ENCODE measurements at regions of chr11 and their contacts with region 1.

Region 1: GRCh38 chr11:6531267-6531752 is 34.2 kb downstream of the DNHD1 start:
- DNase-seq: peak in 7 of 9 donors; percentile 7 to 51 (median 39)
- ATAC-seq: peak; percentile 83
- H3K4me3 ChIP-seq: no peak overlapping the region
- H3K4me3 Mint-ChIP-seq: no peak overlapping the region
- H3K27ac ChIP-seq: no peak overlapping the region
- H3K27ac Mint-ChIP-seq: no peak overlapping the region
- H3K4me1 ChIP-seq: peaks cover 4 to 5% of the 10 kb centered on the region in 2 donors
- H3K4me1 Mint-ChIP-seq: peaks cover 5 to 14% (median 11%) of the 10 kb centered on the region in 7 donors
- H3K27me3 ChIP-seq: no peaks in the 10 kb centered on the region
- H3K27me3 Mint-ChIP-seq: no peaks in the 10 kb centered on the region

Region 2: GRCh38 chr11:5899519-5899918 is 631.8 kb before region 1 on chr11:
- CTCF ChIA-PET with region 1: no interaction called
- POLR2A ChIA-PET with region 1: no interaction called
- intact Hi-C with region 1: no loop called
- DNase-seq: no peak
- ATAC-seq: no peak
- H3K4me3 ChIP-seq: no peak overlapping the region
- H3K4me3 Mint-ChIP-seq: no peak overlapping the region
- H3K27ac ChIP-seq: no peak overlapping the region
- H3K27ac Mint-ChIP-seq: no peak overlapping the region
- H3K4me1 ChIP-seq: no peaks in the 10 kb centered on the region
- H3K4me1 Mint-ChIP-seq: no peaks in the 10 kb centered on the region
- H3K27me3 ChIP-seq: no peaks in the 10 kb centered on the region
- H3K27me3 Mint-ChIP-seq: peaks cover 0 to 20% (median 2%) of the 10 kb centered on the region in 5 donors

Region 3: GRCh38 chr11:6603287-6604080 is 72.2 kb after region 1 on chr11 and contains the starts of genes ILK and RRP8:
- CTCF ChIA-PET with region 1: interaction called, 9 read pairs
- POLR2A ChIA-PET with region 1: interaction called, 3 read pairs
- intact Hi-C with region 1: loop called (anchors 1 kb)
- DNase-seq: peak; percentile 69 to 86 (median 78)
- ATAC-seq: peak; percentile 92
- H3K4me3 ChIP-seq: peak within 1 kb of the TSS; percentile 85
- H3K4me3 Mint-ChIP-seq: no peak within 1 kb of the TSS
- H3K27ac ChIP-seq: peak within 1 kb of the TSS; percentile 86
- H3K27ac Mint-ChIP-seq: no peak within 1 kb of the TSS
- H3K4me1 ChIP-seq: peaks cover 51% of the 10 kb centered on the region in 2 donors
- H3K4me1 Mint-ChIP-seq: peaks cover 9 to 33% (median 21%) of the 10 kb centered on the region in 7 donors
- H3K27me3 ChIP-seq: no peaks in the 10 kb centered on the region
- H3K27me3 Mint-ChIP-seq: no peaks in the 10 kb centered on the region
- total RNA-seq, gene ILK: 34.4 to 165 (median 89.6) TPM
- total RNA-seq, gene RRP8: 21.4 to 37.9 (median 27.9) TPM

Measured in naive thymus-derived CD4-positive, alpha-beta T cell (primary cell).